Esophagus muscularis mucosa (tissue), 4 donors: ENCODE measurements at regions of chr7 and their contacts with region 1.

Region 1: GRCh38 chr7:149195180-149196150 is at the start of gene ZNF282:
- DNase-seq: peak; percentile 96
- H3K4me3 ChIP-seq: peak within 1 kb of the TSS; percentile 72 to 92 (median 81)
- H3K27ac ChIP-seq: peak within 1 kb of the TSS; percentile 89 to 94 (median 91)
- H3K4me1 ChIP-seq: peaks cover 20 to 31% (median 30%) of the 10 kb centered on the region in 4 donors
- H3K27me3 ChIP-seq: peaks cover 0 to 3% (median 0%) of the 10 kb centered on the region in 4 donors
- CTCF ChIP-seq: peak; percentile 53 to 75 (median 58)
- EP300 ChIP-seq: no peak
- POLR2A ChIP-seq: no peak
- total RNA-seq, gene ZNF282: 16.9 to 28.7 (median 22.2) TPM

Region 2: DNA sequence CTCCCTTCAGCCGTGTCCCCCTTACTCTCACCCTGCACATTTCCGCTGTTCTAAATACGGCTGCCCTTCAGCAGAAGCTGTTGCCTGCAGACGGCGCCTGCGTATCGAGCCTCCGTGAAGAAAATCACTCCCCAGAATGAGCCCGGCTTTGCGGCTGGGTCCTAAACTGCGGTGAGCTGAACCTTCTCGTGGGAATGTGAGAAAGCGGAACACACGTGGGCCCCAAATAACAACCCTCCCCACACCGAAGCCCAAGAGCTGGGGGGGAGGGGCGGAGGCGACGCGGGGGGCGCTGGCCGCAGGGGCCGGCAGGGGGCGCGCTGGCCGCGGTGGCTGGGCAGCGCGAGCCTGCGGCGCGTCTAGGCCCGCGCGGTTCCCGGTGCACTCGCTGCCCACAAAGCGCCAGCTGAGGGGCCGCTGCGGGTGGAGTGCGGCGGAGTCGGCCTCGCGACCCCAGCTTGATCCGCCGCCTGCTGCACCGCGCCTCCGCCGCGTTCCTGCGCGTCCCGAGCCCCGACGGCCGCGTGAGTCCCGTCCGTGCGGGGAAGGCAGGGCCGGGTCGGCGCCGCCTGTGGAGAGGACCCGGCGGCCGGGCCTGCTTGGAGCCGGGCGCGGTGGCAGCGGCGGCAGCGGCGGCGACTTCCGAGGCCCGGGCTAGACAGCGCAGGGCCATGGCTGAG is 48.3 kb before region 1 on chr7 and contains the start of gene ZNF398:
- intact Hi-C with region 1: loop called (anchors 5 kb)
- DNase-seq: peak; percentile 92
- H3K4me3 ChIP-seq: peak within 1 kb of the TSS; percentile 82 to 96 (median 92)
- H3K27ac ChIP-seq: peak within 1 kb of the TSS; percentile 88 to 95 (median 94)
- H3K4me1 ChIP-seq: peaks cover 10 to 32% (median 29%) of the 10 kb centered on the region in 4 donors
- H3K27me3 ChIP-seq: no peaks in the 10 kb centered on the region
- CTCF ChIP-seq: peak; percentile 75 to 94 (median 78)
- EP300 ChIP-seq: no peak
- POLR2A ChIP-seq: no peak
- total RNA-seq, gene ZNF398: 16.9 to 22.6 (median 19.2) TPM